ENCODE measurements at regions of chr1 and their contacts with region 1.

Region 1: DNA sequence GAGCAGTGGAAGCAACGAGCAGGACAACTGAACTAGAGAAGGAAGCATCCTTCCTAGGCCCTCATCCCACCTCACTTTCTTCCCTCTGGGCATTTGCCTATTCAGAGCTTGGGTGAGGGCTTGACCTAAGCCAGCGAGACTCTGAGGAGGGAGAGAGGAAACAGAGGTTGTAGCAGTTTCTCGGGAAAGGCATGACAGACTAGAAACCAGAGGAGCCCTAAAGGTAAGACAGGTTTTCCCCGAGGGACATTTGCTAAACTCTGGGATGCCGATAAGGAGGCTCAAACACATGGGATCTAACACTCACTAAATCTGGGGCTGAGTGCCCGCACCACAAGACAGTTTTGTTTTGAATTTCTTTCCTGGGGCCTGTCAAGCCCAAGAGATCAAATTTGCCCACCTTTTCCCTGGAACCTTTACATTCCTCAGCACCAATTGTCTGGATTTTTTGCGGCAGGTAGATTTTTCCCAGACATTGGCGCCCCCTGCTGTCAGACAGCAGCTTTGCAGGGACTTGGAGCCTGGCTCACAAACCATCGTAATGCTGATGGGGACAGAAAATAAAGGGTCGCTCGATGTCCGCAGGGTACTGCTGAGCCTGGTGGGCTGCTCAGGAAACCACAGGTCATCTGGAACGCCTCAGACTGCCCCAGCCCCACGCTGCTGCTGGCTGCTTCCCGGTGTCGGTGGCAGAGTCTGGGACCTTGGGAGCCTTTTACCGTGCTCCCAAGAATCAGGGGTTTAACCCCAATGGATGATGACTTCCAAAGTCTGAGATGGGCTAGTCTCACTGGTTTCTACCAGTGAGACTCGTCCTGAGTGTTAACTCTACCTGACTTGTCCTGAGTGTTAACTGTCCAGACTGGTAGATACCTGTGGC is 23.4 kb upstream of the TSPAN2 start:
- DNase-seq: peak; percentile 62
- ATAC-seq: peak; percentile 39
- H3K4me3 ChIP-seq: no peak overlapping the region
- H3K4me3 Mint-ChIP-seq: no peak overlapping the region
- H3K27ac ChIP-seq: no peak overlapping the region
- H3K27ac Mint-ChIP-seq: no peak overlapping the region
- H3K4me1 ChIP-seq: no peaks in the 10 kb centered on the region
- H3K4me1 Mint-ChIP-seq: no peaks in the 10 kb centered on the region
- H3K27me3 ChIP-seq: peaks cover 0 to 3% (median 0%) of the 10 kb centered on the region in 4 experiments
- H3K27me3 Mint-ChIP-seq: peaks cover 10% of the 10 kb centered on the region
- CTCF ChIP-seq: peak; percentile 99

Region 2: GRCh38 chr1:114346480-114347029 is 766.2 kb before region 1 on chr1:
- CTCF ChIA-PET with region 1: interaction called, 3 read pairs
- POLR2A ChIA-PET with region 1: no interaction called
- intact Hi-C with region 1: loop called (anchors 2 kb)
- DNase-seq: peak; percentile 98
- ATAC-seq: peak; percentile 100
- H3K4me3 ChIP-seq: peak overlapping the region; percentile 24 to 61 (median 53)
- H3K4me3 Mint-ChIP-seq: peak overlapping the region; percentile 97
- H3K27ac ChIP-seq: no peak overlapping the region
- H3K27ac Mint-ChIP-seq: peak overlapping the region; percentile 62
- H3K4me1 ChIP-seq: peaks cover 0 to 13% of the 10 kb centered on the region in 2 donors
- H3K4me1 Mint-ChIP-seq: peaks cover 10% of the 10 kb centered on the region
- H3K27me3 ChIP-seq: peaks cover 0 to 3% (median under 1%) of the 10 kb centered on the region in 4 experiments
- H3K27me3 Mint-ChIP-seq: peaks cover 14% of the 10 kb centered on the region
- CTCF ChIP-seq: peak; percentile 100

Region 3: DNA sequence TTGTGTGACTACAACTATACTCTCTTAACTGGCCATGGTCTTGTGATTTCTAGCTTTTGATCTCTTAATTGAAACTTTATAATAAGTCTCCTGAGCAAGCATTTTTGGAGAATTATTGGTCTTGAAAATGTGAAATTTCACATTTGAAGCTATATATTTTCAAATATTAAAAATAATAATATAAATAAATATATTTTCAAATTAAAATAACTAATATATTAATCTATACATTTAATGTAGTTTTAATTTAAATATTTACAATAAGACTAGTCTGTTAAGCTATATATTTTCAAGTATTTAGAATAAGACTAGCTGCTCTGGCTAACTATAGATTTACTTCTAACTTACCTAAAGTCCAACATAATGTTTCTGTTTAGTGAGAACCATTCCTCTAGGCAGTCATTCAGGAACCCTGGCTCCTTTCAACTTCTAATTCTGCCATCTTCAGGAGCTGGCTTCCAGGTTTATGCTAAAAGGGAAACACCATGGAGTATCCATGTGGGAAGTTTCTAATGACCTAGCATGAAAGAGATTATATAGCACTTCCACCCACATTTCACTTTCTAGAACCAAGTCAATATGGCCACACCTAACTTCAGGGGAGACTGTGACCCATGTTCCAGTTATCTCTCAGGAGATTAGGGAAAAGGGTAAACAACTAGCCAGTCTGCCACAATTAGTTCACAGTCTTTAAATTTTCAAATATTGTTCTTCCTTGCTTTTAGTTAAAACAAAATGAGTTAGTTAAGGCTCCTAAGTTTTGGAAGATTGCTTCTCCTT is 115.0 kb before region 1 on chr1:
- CTCF ChIA-PET with region 1: interaction called, 11 read pairs
- POLR2A ChIA-PET with region 1: no interaction called
- intact Hi-C with region 1: no loop called
- DNase-seq: no peak
- ATAC-seq: no peak
- H3K4me3 ChIP-seq: no peak overlapping the region
- H3K4me3 Mint-ChIP-seq: no peak overlapping the region
- H3K27ac ChIP-seq: no peak overlapping the region
- H3K27ac Mint-ChIP-seq: no peak overlapping the region
- H3K4me1 ChIP-seq: no peaks in the 10 kb centered on the region
- H3K4me1 Mint-ChIP-seq: no peaks in the 10 kb centered on the region
- H3K27me3 ChIP-seq: peaks cover 0 to 3% (median 1%) of the 10 kb centered on the region in 4 experiments
- H3K27me3 Mint-ChIP-seq: peaks cover 19% of the 10 kb centered on the region
- CTCF ChIP-seq: no peak

Region 4: GRCh38 chr1:115082949-115083348 is 29.8 kb before region 1 on chr1:
- CTCF ChIA-PET with region 1: interaction called, 16 read pairs
- POLR2A ChIA-PET with region 1: no interaction called
- intact Hi-C with region 1: no loop called
- DNase-seq: no peak
- ATAC-seq: no peak
- H3K4me3 ChIP-seq: no peak overlapping the region
- H3K4me3 Mint-ChIP-seq: no peak overlapping the region
- H3K27ac ChIP-seq: no peak overlapping the region
- H3K27ac Mint-ChIP-seq: no peak overlapping the region
- H3K4me1 ChIP-seq: no peaks in the 10 kb centered on the region
- H3K4me1 Mint-ChIP-seq: no peaks in the 10 kb centered on the region
- H3K27me3 ChIP-seq: peaks cover 0 to 6% (median 0%) of the 10 kb centered on the region in 4 experiments
- H3K27me3 Mint-ChIP-seq: peaks cover 30% of the 10 kb centered on the region
- CTCF ChIP-seq: no peak

Region 5: DNA sequence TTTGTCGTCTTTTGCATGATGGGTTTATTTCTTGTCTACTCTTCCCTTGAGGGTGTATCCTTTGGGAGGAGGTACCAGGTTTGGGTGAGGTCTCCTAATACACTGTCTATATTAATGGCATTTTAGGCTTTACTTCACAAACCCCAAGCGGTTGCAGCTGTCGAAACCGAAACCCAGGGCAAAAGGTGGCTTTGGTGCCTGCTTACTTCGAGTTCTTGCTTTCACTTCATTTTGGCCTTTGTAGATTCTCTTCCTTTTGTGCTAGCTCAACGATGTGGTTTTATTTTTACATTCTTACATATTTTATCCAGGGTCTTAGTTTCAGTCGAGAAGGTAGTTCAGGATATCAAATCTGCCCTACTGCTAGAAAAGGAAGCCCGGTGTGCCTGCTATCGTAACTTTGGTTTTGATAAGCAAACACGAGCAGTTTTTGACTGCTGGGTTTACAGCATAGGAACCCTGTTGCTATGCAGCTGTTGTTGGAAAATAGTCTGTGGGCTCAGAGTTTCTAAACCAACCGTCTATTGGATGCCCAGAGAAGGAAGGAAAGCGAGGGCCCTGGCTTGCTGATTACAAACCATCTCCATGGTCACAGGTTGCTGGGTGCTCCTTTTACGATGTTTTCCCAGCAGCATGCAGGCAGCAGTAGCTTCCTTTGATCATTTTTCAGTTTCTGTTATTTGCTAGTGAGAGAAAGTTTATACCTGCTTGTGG is 13.6 kb before region 1 on chr1:
- CTCF ChIA-PET with region 1: interaction called, 29 read pairs
- POLR2A ChIA-PET with region 1: no interaction called
- intact Hi-C with region 1: no loop called
- DNase-seq: peak; percentile 83
- ATAC-seq: peak; percentile 82
- H3K4me3 ChIP-seq: peak overlapping the region; percentile 52 to 89 (median 58)
- H3K4me3 Mint-ChIP-seq: peak overlapping the region; percentile 92
- H3K27ac ChIP-seq: peak overlapping the region; percentile 97 to 98
- H3K27ac Mint-ChIP-seq: peak overlapping the region; percentile 97
- H3K4me1 ChIP-seq: peaks cover 15 to 20% of the 10 kb centered on the region in 2 donors
- H3K4me1 Mint-ChIP-seq: peaks cover 28% of the 10 kb centered on the region
- H3K27me3 ChIP-seq: no peaks in the 10 kb centered on the region
- H3K27me3 Mint-ChIP-seq: no peaks in the 10 kb centered on the region
- CTCF ChIP-seq: no peak